ENCODE measurements at regions of chrX and their contacts with region 1.

Region 1: DNA sequence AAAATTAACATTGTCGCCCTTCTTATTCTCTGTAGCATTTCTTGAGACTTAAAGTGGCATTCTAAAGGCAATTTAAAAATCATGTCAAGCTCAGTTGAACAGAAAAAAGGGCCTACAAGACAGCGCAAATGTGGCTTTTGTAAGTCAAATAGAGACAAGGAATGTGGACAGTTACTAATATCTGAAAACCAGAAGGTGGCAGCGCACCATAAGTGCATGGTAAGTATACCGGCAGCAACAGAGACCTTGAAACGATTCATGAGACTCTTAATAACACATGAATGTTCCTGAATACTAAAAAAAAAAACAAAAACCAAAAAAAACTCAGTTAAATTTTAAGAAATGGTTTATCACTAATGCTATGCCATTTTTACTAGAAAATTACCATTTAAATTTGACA is 82.4 kb upstream of the HPRT1 start:
- DNase-seq: peak; percentile 68
- H3K4me3 ChIP-seq: no peak overlapping the region
- H3K27ac ChIP-seq: no peak overlapping the region
- H3K4me1 ChIP-seq: peaks cover 8% of the 10 kb centered on the region
- CTCF ChIP-seq: peak; percentile 79

Region 2: GRCh38 chrX:134161162-134161561 is 216.4 kb before region 1 on chrX:
- CTCF ChIA-PET with region 1: no interaction called
- POLR2A ChIA-PET with region 1: no interaction called
- intact Hi-C with region 1: no loop called
- DNase-seq: no peak
- H3K4me3 ChIP-seq: no peak overlapping the region
- H3K27ac ChIP-seq: no peak overlapping the region
- H3K4me1 ChIP-seq: no peaks in the 10 kb centered on the region
- CTCF ChIP-seq: no peak

Region 3: DNA sequence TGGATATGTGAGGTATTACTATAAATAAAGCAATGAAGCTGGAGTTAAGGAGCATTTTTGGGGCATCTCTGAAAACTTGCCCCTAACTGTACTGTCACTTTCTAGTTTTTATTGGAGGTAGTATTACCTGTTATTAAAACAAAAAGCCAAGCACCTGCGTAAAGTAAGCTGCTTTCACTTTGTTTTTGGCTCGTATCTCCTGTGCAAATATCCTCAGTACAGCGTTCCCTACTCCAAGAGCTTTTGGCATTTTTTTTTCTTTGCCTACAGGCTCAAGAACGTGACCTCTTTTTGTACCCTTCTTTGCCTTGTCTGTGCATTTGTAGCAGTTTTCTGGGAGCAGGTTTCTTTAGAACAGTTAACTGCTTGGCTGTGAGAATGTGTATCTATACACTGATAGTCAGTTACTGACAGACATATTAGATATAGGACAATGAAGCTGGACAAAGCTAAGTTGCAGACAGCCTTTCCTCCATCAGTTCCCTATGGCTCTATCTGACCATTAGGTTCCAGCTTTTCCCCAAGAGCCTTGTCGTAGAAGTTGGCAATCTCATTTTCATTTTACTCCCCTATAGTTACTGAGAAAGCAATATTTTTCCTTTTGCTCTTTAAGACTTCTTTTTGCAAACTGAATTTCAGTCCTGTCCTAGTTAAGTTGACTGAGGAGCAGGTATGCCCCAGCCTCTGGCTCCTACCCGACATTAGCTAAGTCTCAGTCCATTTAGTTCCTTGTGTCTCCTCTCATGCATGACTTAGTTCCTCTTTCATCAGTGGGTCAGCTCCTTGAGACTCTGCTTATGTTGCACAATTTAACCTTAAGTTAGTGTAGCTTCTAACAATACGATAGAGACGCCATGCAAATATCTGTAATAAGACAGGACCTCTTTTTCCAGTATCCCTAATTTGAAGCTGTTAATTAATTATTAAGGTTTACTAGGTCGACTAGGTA is 10.9 kb after region 1 on chrX:
- CTCF ChIA-PET with region 1: no interaction called
- POLR2A ChIA-PET with region 1: interaction called, 30 read pairs
- intact Hi-C with region 1: no loop called
- DNase-seq: peak; percentile 81
- H3K4me3 ChIP-seq: peak overlapping the region; percentile 44
- H3K27ac ChIP-seq: peak overlapping the region; percentile 73
- H3K4me1 ChIP-seq: peaks cover 38% of the 10 kb centered on the region
- CTCF ChIP-seq: no peak

Measured in OCI-LY7 (cell line).